ENCODE measurements at regions of chr3 and their contacts with region 1.

Region 1: DNA sequence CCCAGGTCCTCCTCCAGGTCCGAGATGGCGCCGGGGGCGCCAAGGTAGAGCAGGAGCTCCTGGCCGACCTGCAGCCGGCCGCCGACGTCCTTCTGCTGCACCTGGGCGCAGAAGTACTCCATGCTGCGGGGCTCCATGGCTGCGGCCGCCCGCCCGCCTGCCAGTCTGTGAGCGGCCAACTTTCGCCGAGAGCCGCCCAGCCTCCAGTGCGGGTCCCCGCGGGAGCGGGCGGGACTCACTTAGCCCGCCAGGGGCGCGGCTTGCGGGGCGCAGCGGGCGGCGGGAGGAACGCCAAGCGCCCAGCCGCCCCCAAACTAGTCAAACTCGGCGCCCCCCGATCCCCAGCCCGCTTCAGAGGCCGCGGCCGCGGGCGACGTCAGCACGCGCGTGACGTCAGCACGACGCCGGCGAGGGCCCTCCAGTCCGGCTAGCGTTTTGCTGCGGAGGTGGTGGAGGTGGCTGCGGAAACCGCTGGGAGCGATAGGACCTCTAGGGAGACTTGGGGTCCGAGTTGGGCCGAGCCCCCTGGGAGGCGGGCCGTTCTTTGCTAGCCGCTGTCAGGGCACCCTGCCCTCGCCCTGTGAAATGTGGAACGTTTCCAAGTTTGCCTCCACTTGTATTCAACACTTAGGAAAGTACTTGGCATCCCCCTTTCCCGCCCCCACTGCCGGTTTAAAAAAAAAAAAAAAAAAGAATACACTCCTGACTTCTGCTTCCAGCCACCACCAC is at the start of gene CLASP2:
- DNase-seq: peak; percentile 95
- ATAC-seq: peak; percentile 97
- total RNA-seq, gene CLASP2: 69.4 TPM

Region 2: GRCh38 chr3:33440323-33441232 is 277.5 kb before region 1 on chr3 and contains the start of gene UBP1:
- intact Hi-C with region 1: loop called (anchors 5 kb)
- DNase-seq: peak; percentile 100
- ATAC-seq: peak; percentile 98
- total RNA-seq, gene UBP1: 42.3 TPM

Region 3: DNA sequence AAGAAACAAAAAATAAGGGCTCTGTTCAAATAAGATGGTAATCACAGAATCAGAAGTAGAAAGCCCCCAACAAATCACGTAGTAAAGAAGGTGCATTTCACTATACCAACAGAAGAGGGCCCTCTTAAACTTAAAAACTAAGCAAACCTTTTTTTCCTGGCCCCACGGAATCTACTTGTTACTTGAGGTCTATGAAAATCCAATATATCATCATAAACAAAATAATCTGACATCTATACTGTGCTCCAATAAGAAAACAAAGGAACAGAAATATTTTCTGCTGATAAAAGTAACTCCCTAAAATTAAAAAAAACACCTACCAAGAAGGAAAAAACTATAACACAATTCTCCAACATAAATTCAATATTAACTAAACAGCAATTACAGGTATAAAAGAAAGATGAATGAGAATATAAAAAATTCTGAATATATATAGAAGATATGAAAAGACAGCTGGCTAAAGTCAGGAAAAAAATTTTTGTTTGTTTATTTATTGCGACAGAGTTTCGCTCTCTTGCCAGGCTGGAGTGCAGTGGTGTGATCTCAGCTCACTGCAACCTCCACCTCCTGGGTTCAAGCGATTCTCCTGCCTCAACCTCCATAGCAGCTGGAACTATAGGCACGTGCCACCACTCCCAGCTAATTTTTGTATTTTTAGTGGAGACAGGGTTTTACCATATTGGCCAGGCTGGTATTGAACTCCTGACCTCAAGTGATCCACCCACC is 81.7 kb before region 1 on chr3:
- intact Hi-C with region 1: loop called (anchors 2 kb)
- DNase-seq: no peak
- ATAC-seq: no peak

Region 4: DNA sequence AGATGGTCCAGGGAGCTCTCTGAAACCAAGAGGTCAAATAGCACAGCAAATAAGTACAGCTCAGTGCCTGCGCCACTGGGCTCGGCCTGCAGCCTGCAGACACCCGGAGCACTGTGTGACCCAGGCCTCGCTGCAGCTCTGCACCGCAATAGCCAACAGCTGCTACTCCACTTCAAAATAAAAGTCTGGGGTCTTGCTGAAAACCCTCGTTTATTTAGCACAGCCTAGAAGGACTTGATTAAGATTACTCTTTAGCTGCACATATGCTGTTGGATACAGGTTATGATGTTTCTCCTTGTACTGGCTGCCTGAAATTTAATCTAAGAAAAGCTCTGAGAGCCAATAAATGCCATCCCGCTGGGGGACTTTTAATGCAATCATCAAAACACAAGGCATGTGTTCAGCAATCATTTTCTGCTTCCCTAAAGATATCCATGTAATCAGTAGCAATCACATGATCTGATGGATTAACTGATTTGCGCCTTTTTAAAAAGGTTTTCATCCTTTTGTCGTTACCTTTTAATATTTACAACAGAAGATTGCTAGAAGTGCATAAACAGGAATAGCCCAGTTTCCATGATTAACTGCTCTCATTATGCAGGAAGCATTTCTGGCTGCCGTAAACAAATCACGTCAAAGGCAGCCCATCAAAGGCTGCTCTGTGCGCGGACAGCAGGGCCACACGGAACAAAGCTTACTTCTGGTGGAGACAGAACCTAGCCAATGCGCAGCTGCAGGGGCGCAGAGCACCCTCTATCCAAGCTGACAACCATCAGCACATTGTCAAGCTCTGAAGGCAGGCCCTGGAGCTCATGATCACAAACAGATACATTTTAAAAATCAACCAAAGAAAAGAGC is 58.8 kb before region 1 on chr3:
- intact Hi-C with region 1: loop called (anchors 1 kb)
- DNase-seq: peak; percentile 83
- ATAC-seq: peak; percentile 99

Region 5: GRCh38 chr3:33798411-33799201 is 80.6 kb after region 1 on chr3 and contains the start of gene PDCD6IP:
- intact Hi-C with region 1: loop called (anchors 5 kb)
- DNase-seq: peak; percentile 97
- ATAC-seq: peak; percentile 94
- total RNA-seq, gene PDCD6IP: 128 TPM